ENCODE measurements at regions of chr19 and their contacts with region 1.

Region 1: DNA sequence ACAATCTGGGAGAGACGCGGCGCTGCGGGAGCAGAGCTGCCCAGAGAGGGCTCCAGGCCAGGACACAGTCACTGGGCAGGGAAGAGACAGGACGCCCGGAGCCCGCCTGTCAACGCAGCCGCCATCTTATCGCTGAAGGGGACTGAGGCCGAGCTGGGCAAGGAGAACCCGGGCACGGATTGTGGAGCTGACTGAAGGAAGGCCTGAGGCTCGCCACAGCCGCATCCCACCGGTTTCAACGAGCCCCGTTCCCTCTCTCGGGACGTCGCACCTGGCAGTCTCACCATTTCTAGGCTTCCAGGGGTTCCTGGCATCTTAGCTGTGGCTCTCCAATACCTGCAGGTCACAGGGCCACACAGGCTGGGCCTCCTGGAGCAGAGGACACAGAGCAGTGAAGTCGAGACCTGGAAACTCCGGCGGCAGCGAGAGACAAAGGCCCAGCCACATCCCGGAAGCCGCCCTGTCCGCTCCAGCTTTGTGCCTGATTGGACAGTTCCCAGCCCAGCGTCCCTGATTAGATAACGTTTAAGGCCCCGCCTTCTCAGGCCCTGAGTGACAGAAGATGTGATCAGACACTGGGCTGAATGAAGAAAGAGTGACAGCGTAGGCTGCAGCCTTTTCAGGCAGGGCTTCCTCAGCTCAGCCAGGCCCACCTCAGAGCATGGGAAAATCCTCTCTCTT is at the start of gene ZNF91:
- DNase-seq: peak; percentile 96
- ATAC-seq: peak; percentile 96
- H3K4me3 Mint-ChIP-seq: peak within 1 kb of the TSS; percentile 98
- H3K27ac Mint-ChIP-seq: peak within 1 kb of the TSS; percentile 99
- H3K4me1 Mint-ChIP-seq: peaks cover 31% of the 10 kb centered on the region
- H3K27me3 Mint-ChIP-seq: no peaks in the 10 kb centered on the region
- total RNA-seq, gene ZNF91: 35.7 to 45.5 TPM

Region 2: DNA sequence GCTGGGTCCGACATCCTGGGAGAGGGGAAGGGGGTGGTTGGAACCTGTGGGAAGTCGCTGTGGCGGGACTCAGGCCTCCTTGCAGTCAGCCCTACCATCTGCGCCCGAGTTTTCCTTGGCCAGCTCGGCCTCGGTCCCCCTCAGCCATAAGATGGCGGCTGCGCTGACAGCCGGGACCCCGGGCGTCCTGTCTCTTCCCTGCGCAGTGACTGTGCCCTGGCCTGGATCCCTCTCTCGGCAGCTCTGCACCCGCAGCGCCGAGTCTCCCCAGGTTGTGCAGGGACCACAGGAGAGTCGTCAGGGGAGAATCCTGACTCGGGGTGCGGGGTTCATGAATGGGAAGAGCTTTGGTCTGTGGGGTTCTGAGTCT is 1342.6 kb before region 1 on chr19:
- CTCF ChIA-PET with region 1: no interaction called
- POLR2A ChIA-PET with region 1: no interaction called
- intact Hi-C with region 1: loop called in 1 of 2 experiments (anchors 2 kb)
- DNase-seq: peak; percentile 52
- ATAC-seq: peak; percentile 47
- H3K4me3 Mint-ChIP-seq: peak overlapping the region; percentile 90
- H3K27ac Mint-ChIP-seq: peak overlapping the region; percentile 93
- H3K4me1 Mint-ChIP-seq: peaks cover 5% of the 10 kb centered on the region
- H3K27me3 Mint-ChIP-seq: no peaks in the 10 kb centered on the region

Region 3: GRCh38 chr19:23249911-23250649 is 145.1 kb before region 1 on chr19 and contains the start of gene ZNF724:
- CTCF ChIA-PET with region 1: interaction called, 3 read pairs
- POLR2A ChIA-PET with region 1: interaction called, 5 read pairs
- intact Hi-C with region 1: loop called in 1 of 2 experiments (anchors 1 kb)
- DNase-seq: peak; percentile 94
- ATAC-seq: peak; percentile 100
- H3K4me3 Mint-ChIP-seq: peak within 1 kb of the TSS; percentile 87
- H3K27ac Mint-ChIP-seq: peak within 1 kb of the TSS; percentile 96
- H3K4me1 Mint-ChIP-seq: peaks cover 12% of the 10 kb centered on the region
- H3K27me3 Mint-ChIP-seq: no peaks in the 10 kb centered on the region
- total RNA-seq, gene ZNF724: 15.1 to 19.1 TPM

Region 4: GRCh38 chr19:23758187-23759074 is 363.2 kb after region 1 on chr19 and contains the start of gene ZNF681:
- CTCF ChIA-PET with region 1: interaction called, 3 read pairs
- POLR2A ChIA-PET with region 1: no interaction called
- intact Hi-C with region 1: loop called (anchors 1 to 5 kb)
- DNase-seq: peak; percentile 94
- ATAC-seq: peak; percentile 93
- H3K4me3 Mint-ChIP-seq: peak within 1 kb of the TSS; percentile 95
- H3K27ac Mint-ChIP-seq: peak within 1 kb of the TSS; percentile 95
- H3K4me1 Mint-ChIP-seq: peaks cover 25% of the 10 kb centered on the region
- H3K27me3 Mint-ChIP-seq: no peaks in the 10 kb centered on the region
- total RNA-seq, gene ZNF681: 5.7 to 9.1 TPM

Region 5: GRCh38 chr19:24033301-24033962 is 638.3 kb after region 1 on chr19:
- CTCF ChIA-PET with region 1: no interaction called
- POLR2A ChIA-PET with region 1: interaction called, 4 read pairs
- intact Hi-C with region 1: loop called in 1 of 2 experiments (anchors 1 kb)
- DNase-seq: peak; percentile 90
- ATAC-seq: peak; percentile 99
- H3K4me3 Mint-ChIP-seq: peak overlapping the region; percentile 99
- H3K27ac Mint-ChIP-seq: peak overlapping the region; percentile 98
- H3K4me1 Mint-ChIP-seq: peaks cover 36% of the 10 kb centered on the region
- H3K27me3 Mint-ChIP-seq: no peaks in the 10 kb centered on the region

Region 6: DNA sequence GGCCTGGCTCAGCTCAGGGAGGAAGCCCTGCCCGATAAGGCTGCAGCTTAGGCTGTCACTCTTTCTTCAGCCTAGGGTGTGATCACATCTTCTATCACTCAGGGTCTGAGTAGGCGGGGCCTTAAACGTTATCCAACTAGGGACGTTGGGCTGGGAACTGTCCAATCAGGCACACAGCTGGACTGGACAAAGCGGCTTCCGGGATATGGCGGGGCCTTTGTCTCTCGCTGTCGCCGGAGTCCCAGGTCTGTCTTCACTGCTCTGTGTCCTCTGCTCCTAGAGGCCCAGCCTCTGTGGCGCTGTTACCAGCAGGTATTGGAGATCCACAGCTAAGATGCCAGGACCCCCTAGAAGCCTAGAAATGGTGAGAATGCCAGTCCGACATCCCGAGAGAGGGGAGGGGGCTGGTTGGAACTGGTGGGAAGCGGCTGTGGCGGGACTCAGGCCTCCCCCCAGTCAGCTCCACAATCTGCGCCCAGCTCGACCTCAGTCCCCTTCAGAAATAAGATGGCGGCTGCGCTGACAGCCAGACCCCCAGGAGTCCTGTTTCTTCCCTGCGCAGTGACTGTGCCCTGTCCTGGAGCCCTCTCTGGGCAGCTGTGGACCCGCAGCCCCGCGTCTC is 691.9 kb after region 1 on chr19 and contains the start of gene ZNF254:
- CTCF ChIA-PET with region 1: no interaction called
- POLR2A ChIA-PET with region 1: interaction called, 3 read pairs
- intact Hi-C with region 1: loop called in 1 of 2 experiments (anchors 2 kb)
- DNase-seq: peak; percentile 93
- ATAC-seq: peak; percentile 100
- H3K4me3 Mint-ChIP-seq: peak within 1 kb of the TSS; percentile 94
- H3K27ac Mint-ChIP-seq: peak within 1 kb of the TSS; percentile 97
- H3K4me1 Mint-ChIP-seq: peaks cover 6% of the 10 kb centered on the region
- H3K27me3 Mint-ChIP-seq: no peaks in the 10 kb centered on the region
- total RNA-seq, gene ZNF254: 8.8 to 9.6 TPM